ENCODE measurements at regions of chr1 and their contacts with region 1.

Region 1: DNA sequence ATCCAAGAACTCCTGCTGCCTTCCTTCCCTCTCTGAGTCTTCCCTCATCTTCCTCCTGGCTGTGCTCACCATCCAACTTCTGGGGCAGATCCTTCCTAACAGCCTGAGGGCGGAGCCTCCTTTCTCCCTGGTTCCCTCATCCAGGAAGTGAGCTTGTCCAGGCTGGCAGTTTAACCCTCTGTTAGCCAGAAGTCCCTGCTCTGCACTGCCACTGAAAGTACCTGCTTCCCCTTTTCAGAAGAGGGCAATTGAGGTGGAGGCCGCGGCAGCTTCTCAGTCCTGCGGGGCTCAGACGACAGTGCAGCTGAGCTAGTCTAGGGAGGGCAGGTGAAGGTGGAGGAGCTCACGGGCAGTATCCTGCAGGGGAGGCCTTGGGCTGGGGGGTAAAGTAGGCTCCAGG is 149.1 kb downstream of the FCRL5 start:
- DNase-seq: no peak
- ATAC-seq: peak; percentile 89
- H3K4me3 ChIP-seq: no peak overlapping the region
- H3K27ac ChIP-seq: no peak overlapping the region
- H3K4me1 ChIP-seq: peaks cover 27% of the 10 kb centered on the region
- H3K27me3 ChIP-seq: no peaks in the 10 kb centered on the region; a peak in 1 of 4 replicates
- CTCF ChIP-seq: no peak
- EP300 ChIP-seq: peak; percentile 39 to 65; a peak in 2 of 4 replicates
- POLR2A ChIP-seq: no peak
- RAD21 ChIP-seq: no peak

Region 2: GRCh38 chr1:157380523-157380922 is 22.7 kb before region 1 on chr1:
- CTCF ChIA-PET with region 1: interaction called, 7 read pairs
- POLR2A ChIA-PET with region 1: interaction called, 3 read pairs
- RAD21 ChIA-PET with region 1: interaction called, 50 read pairs
- SMC1A ChIA-PET with region 1: interaction called, 134 read pairs
- in situ Hi-C with region 1: no loop called
- intact Hi-C with region 1: no loop called
- DNase-seq: no peak
- ATAC-seq: peak; percentile 45
- H3K4me3 ChIP-seq: no peak overlapping the region
- H3K27ac ChIP-seq: no peak overlapping the region
- H3K4me1 ChIP-seq: no peaks in the 10 kb centered on the region
- H3K27me3 ChIP-seq: no peaks in the 10 kb centered on the region; a peak in 1 of 4 replicates
- CTCF ChIP-seq: no peak
- EP300 ChIP-seq: no peak
- POLR2A ChIP-seq: no peak
- RAD21 ChIP-seq: no peak

Region 3: GRCh38 chr1:157390651-157391050 is 12.6 kb before region 1 on chr1:
- CTCF ChIA-PET with region 1: interaction called, 9 read pairs
- POLR2A ChIA-PET with region 1: interaction called, 5 read pairs
- RAD21 ChIA-PET with region 1: interaction called, 10 read pairs
- SMC1A ChIA-PET with region 1: interaction called, 134 read pairs
- in situ Hi-C with region 1: no loop called
- intact Hi-C with region 1: no loop called
- DNase-seq: no peak
- ATAC-seq: no peak
- H3K4me3 ChIP-seq: no peak overlapping the region
- H3K27ac ChIP-seq: no peak overlapping the region
- H3K4me1 ChIP-seq: no peaks in the 10 kb centered on the region
- H3K27me3 ChIP-seq: peaks cover 0 to 7% of the 10 kb centered on the region in 2 experiments; a peak in 2 of 4 replicates
- CTCF ChIP-seq: no peak
- EP300 ChIP-seq: no peak
- POLR2A ChIP-seq: no peak
- RAD21 ChIP-seq: no peak

Region 4: GRCh38 chr1:157490467-157491165 is 87.4 kb after region 1 on chr1:
- CTCF ChIA-PET with region 1: interaction called, 22 read pairs
- POLR2A ChIA-PET with region 1: no interaction called
- RAD21 ChIA-PET with region 1: interaction called, 16 read pairs
- SMC1A ChIA-PET with region 1: interaction called, 51 read pairs
- in situ Hi-C with region 1: no loop called
- intact Hi-C with region 1: no loop called
- DNase-seq: no peak
- ATAC-seq: peak; percentile 77
- H3K4me3 ChIP-seq: no peak overlapping the region
- H3K27ac ChIP-seq: no peak overlapping the region
- H3K4me1 ChIP-seq: no peaks in the 10 kb centered on the region
- H3K27me3 ChIP-seq: 0 out of 4 replicates have a peak, but pooled peaks cover 0 to 2% of the 10 kb centered on the region in 2 experiments
- CTCF ChIP-seq: peak; percentile 67 to 73 (median 70)
- EP300 ChIP-seq: no peak
- POLR2A ChIP-seq: no peak
- RAD21 ChIP-seq: peak; percentile 67

Measured in GM12878 (cell line).